Activated CD4-positive, alpha-beta memory T cell treated with anti-CD3 and anti-CD28 coated beads, Interleukin-2, amount 10 ng/mL, durations not matched to agents 7 days and 5 days (primary cell): ENCODE measurements at regions of chr6 and their contacts with region 1.

Region 1: DNA sequence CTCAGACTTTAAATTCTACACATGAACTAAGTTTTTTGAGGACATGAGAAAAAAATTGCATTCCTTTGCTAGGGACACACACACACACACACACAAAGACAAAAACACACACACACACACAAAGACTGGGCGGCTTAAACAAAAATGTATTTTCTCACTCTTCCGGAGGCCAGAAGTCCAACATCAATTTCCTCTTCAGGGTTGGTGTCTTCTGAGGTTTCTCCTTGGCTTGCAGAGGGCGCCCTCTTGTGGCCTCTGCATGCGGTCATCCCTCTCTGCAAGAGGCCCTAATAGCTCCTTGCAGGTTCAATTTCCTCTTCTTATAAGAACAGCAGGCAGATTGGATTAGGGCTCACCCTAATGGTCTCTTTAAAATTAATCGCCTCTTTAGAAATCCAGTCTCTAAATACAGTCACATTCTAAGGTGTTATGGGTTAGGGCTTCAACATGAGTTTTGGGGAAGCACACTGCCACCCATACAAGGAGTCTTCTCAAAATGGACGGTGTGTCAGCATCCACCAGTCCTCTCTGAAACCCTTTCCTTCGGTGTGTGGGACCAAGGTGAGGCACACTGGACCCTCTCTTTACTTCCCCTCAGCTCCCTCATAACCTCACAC is 61.4 kb downstream of the GPR6 start:
- DNase-seq: peak; percentile 88
- H3K4me3 Mint-ChIP-seq: peak overlapping the region; percentile 72
- H3K27ac Mint-ChIP-seq: peak overlapping the region; percentile 63
- H3K4me1 Mint-ChIP-seq: peaks cover 20% of the 10 kb centered on the region
- H3K27me3 Mint-ChIP-seq: no peaks in the 10 kb centered on the region

Region 2: GRCh38 chr6:109491207-109491938 is 548.1 kb before region 1 on chr6:
- CTCF ChIA-PET with region 1: interaction called, 11 read pairs
- POLR2A ChIA-PET with region 1: interaction called, 9 read pairs
- DNase-seq: peak; percentile 56
- H3K4me3 Mint-ChIP-seq: peak overlapping the region; percentile 41
- H3K27ac Mint-ChIP-seq: peak overlapping the region; percentile 92
- H3K4me1 Mint-ChIP-seq: peaks cover 35% of the 10 kb centered on the region
- H3K27me3 Mint-ChIP-seq: peaks cover 5% of the 10 kb centered on the region

Region 3: GRCh38 chr6:109526905-109527628 is 512.4 kb before region 1 on chr6:
- CTCF ChIA-PET with region 1: interaction called, 25 read pairs
- POLR2A ChIA-PET with region 1: interaction called, 3 read pairs
- DNase-seq: peak; percentile 53
- H3K4me3 Mint-ChIP-seq: no peak overlapping the region
- H3K27ac Mint-ChIP-seq: no peak overlapping the region
- H3K4me1 Mint-ChIP-seq: peaks cover 2% of the 10 kb centered on the region
- H3K27me3 Mint-ChIP-seq: no peaks in the 10 kb centered on the region

Region 4: GRCh38 chr6:109690737-109691621 is 348.5 kb before region 1 on chr6 and contains the starts of genes AK9 and FIG4:
- CTCF ChIA-PET with region 1: interaction called, 18 read pairs
- POLR2A ChIA-PET with region 1: no interaction called
- DNase-seq: peak; percentile 92
- H3K4me3 Mint-ChIP-seq: peak within 1 kb of the TSS; percentile 83
- H3K27ac Mint-ChIP-seq: peak within 1 kb of the TSS; percentile 72
- H3K4me1 Mint-ChIP-seq: peaks cover 23% of the 10 kb centered on the region
- H3K27me3 Mint-ChIP-seq: peaks cover 7% of the 10 kb centered on the region
- total RNA-seq, gene AK9: 4.9 to 5.5 TPM
- total RNA-seq, gene FIG4: 13.5 to 14.4 TPM

Region 5: DNA sequence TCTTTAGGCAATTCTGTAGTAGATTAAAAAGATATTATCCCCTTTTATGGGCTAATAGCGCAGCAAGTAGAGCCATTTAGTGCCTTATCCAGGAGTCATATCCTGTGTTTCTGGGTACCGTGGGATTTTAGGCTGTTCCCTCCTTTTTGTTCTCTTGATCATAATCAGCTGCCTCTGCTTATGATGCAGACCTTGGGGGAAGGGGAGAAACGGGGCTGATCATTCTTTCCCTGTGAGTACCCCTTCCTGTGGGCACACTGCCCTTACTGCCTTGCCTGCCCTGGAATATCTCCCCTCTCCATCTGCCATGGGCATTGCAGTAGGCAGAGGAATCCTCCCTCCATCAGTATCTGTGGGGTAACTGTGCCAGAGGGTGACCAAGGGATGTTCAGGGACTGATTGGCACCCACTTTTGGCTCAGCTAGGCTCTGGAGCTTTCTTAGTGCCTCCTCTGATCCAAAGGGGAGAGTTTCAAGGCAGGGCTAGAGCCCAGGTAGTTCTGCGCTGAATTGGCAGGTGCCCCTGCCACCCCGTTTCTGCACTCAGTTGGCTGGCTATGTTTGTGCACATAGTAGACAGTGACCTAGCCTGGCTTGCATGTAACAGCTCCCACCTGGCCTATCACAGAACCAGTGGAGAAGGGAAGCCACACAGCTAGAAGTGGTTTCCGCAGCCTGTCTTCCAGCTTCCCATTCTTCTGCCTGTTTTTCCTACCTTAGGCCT is 245.1 kb before region 1 on chr6:
- CTCF ChIA-PET with region 1: interaction called, 13 read pairs
- POLR2A ChIA-PET with region 1: no interaction called
- DNase-seq: no peak
- H3K4me3 Mint-ChIP-seq: no peak overlapping the region
- H3K27ac Mint-ChIP-seq: peak overlapping the region; percentile 58
- H3K4me1 Mint-ChIP-seq: peaks cover 11% of the 10 kb centered on the region
- H3K27me3 Mint-ChIP-seq: no peaks in the 10 kb centered on the region

Region 6: DNA sequence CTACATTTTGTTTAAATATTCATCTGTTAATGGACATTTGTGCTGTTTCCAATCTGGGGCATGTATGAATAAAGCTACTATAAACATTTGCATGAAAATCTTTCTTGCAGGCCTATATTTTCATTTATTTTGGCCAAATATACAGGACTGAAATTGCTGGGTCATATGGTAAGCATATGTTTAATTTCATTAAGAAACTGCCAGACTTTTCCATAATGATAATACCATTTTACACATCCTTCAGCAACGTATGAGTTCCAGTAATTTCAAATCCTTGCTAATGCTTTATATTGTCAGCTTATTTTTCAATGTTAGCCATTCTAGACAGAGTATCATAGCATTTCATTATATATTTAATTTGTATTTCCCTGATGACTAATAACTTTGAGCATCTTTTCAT is 10.3 kb before region 1 on chr6:
- CTCF ChIA-PET with region 1: interaction called, 20 read pairs
- POLR2A ChIA-PET with region 1: interaction called, 3 read pairs
- DNase-seq: no peak
- H3K4me3 Mint-ChIP-seq: no peak overlapping the region
- H3K27ac Mint-ChIP-seq: no peak overlapping the region
- H3K4me1 Mint-ChIP-seq: no peaks in the 10 kb centered on the region
- H3K27me3 Mint-ChIP-seq: peaks cover 1% of the 10 kb centered on the region

Region 7: DNA sequence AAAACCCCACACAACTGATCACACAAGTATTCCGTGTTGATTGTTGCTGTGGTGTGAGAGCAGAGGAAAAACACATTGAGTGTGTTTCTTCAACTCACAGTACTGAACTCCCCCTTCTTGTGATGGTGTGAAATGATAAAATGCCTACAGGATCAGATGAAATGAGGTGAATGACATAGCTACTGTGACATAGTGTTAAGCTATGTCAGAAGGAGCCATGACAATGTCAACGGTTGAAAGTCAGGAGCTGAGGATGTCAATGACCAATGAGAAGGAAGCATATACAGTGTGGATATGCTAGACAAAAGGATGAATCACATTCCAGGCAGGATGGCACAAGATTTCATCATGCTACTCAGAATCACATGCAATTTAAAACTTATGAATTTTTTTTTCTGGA is 101.2 kb after region 1 on chr6:
- CTCF ChIA-PET with region 1: no interaction called
- POLR2A ChIA-PET with region 1: no interaction called
- DNase-seq: no peak
- H3K4me3 Mint-ChIP-seq: no peak overlapping the region
- H3K27ac Mint-ChIP-seq: no peak overlapping the region
- H3K4me1 Mint-ChIP-seq: no peaks in the 10 kb centered on the region
- H3K27me3 Mint-ChIP-seq: peaks cover 5% of the 10 kb centered on the region

Region 8: GRCh38 chr6:110389689-110390382 is 350.4 kb after region 1 on chr6:
- CTCF ChIA-PET with region 1: interaction called, 53 read pairs
- POLR2A ChIA-PET with region 1: interaction called, 3 read pairs
- DNase-seq: no peak
- H3K4me3 Mint-ChIP-seq: no peak overlapping the region
- H3K27ac Mint-ChIP-seq: no peak overlapping the region
- H3K4me1 Mint-ChIP-seq: peaks cover 15% of the 10 kb centered on the region
- H3K27me3 Mint-ChIP-seq: no peaks in the 10 kb centered on the region